ENCODE measurements at regions of chr2 and their contacts with region 1.

Region 1: DNA sequence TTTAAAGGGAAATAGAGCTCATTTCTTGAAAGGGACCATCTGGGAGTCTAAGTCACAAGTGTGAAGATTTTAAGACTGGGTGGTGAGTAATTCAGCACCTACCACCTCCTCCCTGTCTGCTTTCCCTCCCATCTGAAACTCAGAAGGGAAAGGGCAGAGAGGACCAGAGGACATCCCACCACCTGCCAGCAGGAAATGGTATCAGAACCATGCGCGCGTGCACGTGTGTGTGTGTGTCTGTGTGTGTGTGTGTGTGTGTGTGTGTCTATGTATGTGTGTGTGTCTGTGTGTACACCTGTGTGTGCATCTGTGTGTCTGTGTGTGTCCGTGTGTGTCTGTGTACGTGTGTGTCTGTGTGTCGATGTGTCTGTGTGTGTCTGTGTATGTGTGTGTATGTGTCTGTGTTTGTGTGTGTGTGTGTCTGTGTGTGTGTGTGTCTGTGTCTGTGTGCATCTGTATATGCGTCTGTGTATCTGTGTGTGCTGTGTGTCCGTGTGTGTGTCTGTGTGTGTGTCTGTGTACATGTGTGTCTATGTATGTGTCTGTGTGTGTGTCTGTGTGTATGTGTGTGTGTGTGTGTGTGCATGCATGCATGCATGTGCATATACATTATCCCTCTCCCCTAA is 76.8 kb downstream of the ZFP36L2 start:
- DNase-seq: no peak
- ATAC-seq: peak; percentile 40 to 43
- H3K4me3 Mint-ChIP-seq: peak overlapping the region in 9 of 10 donors; percentile 7 to 82 (median 44)
- H3K27ac Mint-ChIP-seq: peak overlapping the region; percentile 82 to 97 (median 89)
- H3K4me1 Mint-ChIP-seq: peaks cover 43 to 78% (median 66%) of the 10 kb centered on the region in 4 donors
- H3K27me3 Mint-ChIP-seq: no peaks in the 10 kb centered on the region

Region 2: GRCh38 chr2:43083710-43084698 is 65.6 kb before region 1 on chr2:
- POLR2A ChIA-PET with region 1: no interaction called
- DNase-seq: peak in 1 of 10 donors; percentile 36
- ATAC-seq: no peak
- H3K4me3 Mint-ChIP-seq: no peak overlapping the region
- H3K27ac Mint-ChIP-seq: peak overlapping the region in 5 of 10 donors; percentile 1 to 80 (median 67)
- H3K4me1 Mint-ChIP-seq: peaks cover 32 to 82% (median 66%) of the 10 kb centered on the region in 4 donors
- H3K27me3 Mint-ChIP-seq: no peaks in the 10 kb centered on the region

Region 3: DNA sequence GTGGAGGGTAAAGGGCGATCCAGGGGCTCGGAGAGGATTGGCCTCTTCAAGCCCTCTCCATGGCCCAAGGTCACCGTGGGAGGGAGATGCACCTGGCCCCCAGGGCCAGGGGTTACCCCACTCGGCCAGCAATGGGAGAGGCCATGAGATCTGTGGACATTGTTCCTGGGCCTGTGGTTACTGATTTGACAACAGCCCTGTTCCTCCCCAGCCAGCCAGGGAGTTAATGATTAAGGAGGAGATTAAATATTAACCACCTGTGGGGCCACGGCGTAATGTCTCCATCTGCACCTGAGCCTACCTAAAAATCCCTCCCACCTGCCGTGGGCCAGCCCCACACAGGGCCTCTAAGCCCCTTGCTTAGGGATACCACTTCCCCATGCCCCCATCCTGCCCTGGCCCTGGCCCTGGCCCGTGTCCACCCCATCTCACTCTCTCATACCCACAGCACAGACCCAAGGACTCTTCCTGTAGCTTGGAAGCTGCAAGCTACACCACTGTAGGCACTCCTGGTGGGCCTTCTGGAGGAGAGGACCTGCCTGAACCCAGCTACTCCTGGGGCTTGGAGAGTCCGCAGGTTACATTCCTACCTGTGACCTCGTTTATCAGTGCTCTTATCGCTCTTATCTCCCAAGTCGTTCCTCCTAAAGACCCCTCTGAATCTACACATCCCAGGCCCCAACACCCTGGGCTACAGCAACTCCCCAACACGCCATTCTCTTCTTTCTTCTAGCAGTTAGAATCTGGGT is 44.7 kb after region 1 on chr2:
- POLR2A ChIA-PET with region 1: interaction called, 11 read pairs
- DNase-seq: no peak
- ATAC-seq: peak; percentile 2 to 13
- H3K4me3 Mint-ChIP-seq: peak overlapping the region; percentile 81 to 96 (median 90)
- H3K27ac Mint-ChIP-seq: peak overlapping the region; percentile 96 to 100 (median 99)
- H3K4me1 Mint-ChIP-seq: peaks cover 36 to 76% (median 66%) of the 10 kb centered on the region in 4 donors
- H3K27me3 Mint-ChIP-seq: no peaks in the 10 kb centered on the region

Measured in naive thymus-derived CD8-positive, alpha-beta T cell (primary cell).